Uterus (tissue), 4 donors: ENCODE measurements at regions of chr13 and their contacts with region 1.

Region 1: DNA sequence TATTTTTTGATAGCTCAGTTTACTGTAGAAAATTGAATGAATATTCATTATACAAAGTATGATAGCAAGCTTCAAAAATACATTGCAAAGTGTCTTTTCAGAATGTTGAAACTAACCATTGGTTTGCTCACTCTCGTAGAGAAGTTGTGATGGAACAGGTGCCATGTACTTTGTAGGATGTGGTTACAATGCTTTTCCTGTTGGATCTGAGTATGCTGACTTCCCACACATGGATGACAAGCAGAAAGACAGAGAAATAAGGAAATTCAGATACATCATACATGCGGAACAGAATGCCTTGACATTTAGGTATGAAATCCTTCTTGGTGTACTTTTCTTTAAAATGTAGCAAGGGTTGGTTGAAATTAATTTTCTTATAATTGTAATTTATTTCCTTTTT is 30.5 kb downstream of the CDADC1 start:
- DNase-seq: no peak
- H3K4me3 ChIP-seq: no peak overlapping the region
- H3K27ac ChIP-seq: no peak overlapping the region
- H3K4me1 ChIP-seq: no peaks in the 10 kb centered on the region
- H3K27me3 ChIP-seq: no peaks in the 10 kb centered on the region
- CTCF ChIP-seq: no peak
- POLR2A ChIP-seq: no peak

Region 2: DNA sequence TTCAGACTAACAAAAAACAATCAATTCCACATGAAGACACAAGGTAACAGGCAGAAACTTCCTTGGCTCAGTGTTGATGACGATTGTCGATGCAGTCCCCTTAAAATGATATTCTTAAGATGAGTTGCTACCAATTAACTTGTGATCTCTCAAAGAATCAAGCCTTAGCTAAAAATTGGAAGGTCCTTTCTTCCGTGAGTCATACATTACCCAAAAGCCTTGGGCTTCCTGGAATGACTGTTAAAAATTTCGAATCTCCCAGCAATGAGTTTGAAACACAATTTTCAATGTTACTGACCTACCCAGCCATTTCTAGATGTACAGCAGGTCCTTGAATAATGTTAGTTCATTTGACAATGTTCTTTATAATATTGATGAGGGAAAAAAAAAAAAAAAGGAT is 1002.7 kb before region 1 on chr13:
- intact Hi-C with region 1: no loop called
- DNase-seq: no peak
- H3K4me3 ChIP-seq: no peak overlapping the region
- H3K27ac ChIP-seq: no peak overlapping the region
- H3K4me1 ChIP-seq: no peaks in the 10 kb centered on the region
- H3K27me3 ChIP-seq: no peaks in the 10 kb centered on the region
- CTCF ChIP-seq: no peak
- POLR2A ChIP-seq: no peak

Region 3: DNA sequence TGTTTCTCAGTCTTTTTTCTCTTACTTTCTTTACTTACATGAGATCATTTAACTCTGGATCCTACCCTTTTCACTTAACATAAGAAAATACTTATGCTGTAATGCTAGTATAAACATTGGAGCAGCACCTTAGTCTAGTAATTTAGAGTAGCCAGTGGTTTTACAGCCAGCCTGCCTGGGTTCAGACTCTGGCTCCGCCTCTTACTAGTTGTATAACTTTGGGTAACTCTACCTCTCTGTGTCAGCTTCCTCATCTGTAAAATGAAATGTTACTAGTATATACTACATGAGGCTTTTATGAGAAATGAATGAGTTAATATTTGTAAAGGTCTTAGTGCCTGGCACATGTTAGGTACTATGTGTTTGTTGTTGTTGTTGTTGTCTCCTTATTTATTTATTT is 24.9 kb before region 1 on chr13:
- intact Hi-C with region 1: loop called (anchors 1 kb)
- DNase-seq: no peak
- H3K4me3 ChIP-seq: no peak overlapping the region
- H3K27ac ChIP-seq: no peak overlapping the region
- H3K4me1 ChIP-seq: peaks cover 0 to 9% of the 10 kb centered on the region in 2 donors
- H3K27me3 ChIP-seq: no peaks in the 10 kb centered on the region
- CTCF ChIP-seq: no peak
- POLR2A ChIP-seq: no peak

Region 4: DNA sequence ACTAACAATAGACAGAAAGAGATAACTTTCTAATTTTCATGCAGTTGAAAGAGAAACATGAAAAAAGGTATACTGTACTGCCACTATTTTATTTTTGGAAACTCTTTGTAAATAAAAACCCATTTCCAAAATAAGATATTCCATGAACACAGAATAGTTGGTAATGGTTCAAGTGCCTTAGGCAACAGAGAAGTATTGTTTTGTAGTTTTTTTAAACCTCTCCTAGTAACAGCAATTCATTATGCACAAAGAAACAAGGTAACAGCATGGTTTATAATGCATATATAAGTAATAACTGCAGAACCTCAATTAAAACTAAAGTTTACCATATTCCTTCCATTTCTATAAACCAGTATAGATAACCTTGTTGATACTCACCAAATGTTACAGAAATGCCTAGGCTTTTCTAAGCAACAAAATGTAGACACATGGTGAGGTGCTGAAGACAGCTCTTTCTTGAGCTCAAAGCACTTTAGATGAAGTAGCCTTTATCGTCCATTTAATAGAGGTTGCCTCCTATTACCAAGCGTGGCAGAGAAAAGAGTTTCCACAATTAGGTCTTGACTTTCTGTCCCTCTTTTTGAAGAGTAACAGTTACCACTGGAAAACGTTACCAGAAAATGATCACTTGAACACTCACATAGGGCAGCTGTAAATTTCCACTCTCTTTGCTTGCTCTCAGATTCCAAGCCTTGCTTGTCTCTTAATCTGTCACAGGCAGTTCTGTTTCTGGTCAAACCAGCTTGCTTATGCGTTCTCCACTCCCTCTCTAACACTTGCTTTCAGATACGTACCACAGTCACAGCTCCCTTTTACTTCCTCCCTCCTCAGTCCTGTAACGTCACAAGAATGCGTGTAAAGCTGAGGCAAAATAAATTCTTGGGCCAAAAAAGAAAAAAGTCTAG is 122.8 kb after region 1 on chr13:
- intact Hi-C with region 1: no loop called
- DNase-seq: peak; percentile 21 to 60
- H3K4me3 ChIP-seq: peak overlapping the region; percentile 26 to 38
- H3K27ac ChIP-seq: peak overlapping the region; percentile 83 to 92
- H3K4me1 ChIP-seq: no peaks in the 10 kb centered on the region
- H3K27me3 ChIP-seq: no peaks in the 10 kb centered on the region
- CTCF ChIP-seq: no peak
- POLR2A ChIP-seq: peak in 1 of 2 donors; percentile 44

Region 5: DNA sequence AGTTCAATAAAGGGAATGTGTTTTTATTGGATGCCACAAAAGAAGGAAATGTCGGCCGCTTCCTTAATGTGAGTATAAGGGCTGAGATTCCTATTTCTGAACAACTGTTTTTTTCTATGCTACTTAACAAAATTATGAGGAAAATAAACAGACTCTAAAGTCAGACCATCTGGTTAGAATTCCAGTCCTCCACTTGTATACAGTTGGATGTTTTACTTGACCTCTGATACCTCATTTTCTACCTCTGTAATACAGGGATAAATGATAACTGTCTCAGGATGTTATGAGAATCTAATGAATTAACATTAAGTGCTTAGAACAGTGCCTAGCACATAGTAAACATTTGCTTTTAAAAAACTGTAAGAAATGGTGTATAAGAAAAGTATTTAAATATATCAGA is 210.4 kb after region 1 on chr13:
- intact Hi-C with region 1: no loop called
- DNase-seq: no peak
- H3K4me3 ChIP-seq: no peak overlapping the region
- H3K27ac ChIP-seq: no peak overlapping the region
- H3K4me1 ChIP-seq: no peaks in the 10 kb centered on the region
- H3K27me3 ChIP-seq: no peaks in the 10 kb centered on the region
- CTCF ChIP-seq: no peak
- POLR2A ChIP-seq: no peak